Activated CD8-positive, alpha-beta T cell treated with anti-CD3 and anti-CD28 coated beads, Interleukin-2, amount 10 ng/mL, durations not matched to agents 7 days and 5 days (primary cell): ENCODE measurements at regions of chr11 and their contacts with region 1.

Region 1: DNA sequence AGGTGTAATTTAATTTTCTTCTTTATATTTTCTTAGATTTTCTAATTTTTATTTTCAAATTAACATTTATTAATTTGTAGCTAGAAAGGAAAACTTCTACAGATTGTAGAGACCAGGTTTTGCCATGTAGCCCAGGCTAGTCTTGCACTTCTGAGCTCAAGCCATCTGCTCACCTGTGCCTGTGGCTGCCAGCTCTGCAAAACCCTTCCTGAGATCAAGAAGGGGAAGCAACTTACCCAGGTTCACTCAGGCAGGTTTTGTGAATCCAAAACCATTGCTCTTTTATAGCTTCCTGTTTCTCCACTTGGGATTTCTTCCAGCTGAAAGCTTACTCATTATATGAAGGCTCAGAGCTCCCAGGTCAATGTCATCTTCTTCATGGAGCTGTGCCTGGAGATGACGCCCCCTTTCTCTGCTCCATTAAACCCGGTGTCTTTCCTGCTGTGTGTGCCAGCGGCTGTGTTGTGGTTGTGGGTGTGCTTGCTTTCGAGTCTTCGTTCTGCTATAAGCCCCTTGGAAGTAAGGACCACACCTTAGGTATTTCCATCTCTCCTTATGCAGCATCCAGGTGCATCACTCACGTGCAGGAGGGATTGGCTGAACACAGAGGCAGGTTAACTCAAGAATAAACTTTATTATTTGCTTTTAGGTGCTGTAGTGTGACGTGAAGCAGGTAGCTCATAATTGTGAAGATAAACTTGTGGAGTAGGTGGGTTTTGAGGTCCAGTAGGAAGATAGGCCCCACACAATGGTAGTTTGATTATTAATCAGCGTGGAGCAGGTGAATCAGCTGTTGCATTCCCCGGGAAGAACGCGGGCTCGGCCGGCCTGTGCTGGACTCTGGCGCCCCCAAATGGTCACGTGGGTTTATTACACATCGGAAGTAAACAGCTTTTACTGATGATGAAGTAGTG is 42.2 kb upstream of the INCENP start:
- DNase-seq: peak; percentile 82
- ATAC-seq: peak; percentile 67
- H3K4me3 Mint-ChIP-seq: peak overlapping the region; percentile 36
- H3K27ac Mint-ChIP-seq: no peak overlapping the region
- H3K4me1 Mint-ChIP-seq: peaks cover 8% of the 10 kb centered on the region
- H3K27me3 Mint-ChIP-seq: no peaks in the 10 kb centered on the region

Region 2: GRCh38 chr11:61881397-61881796 is 200.2 kb before region 1 on chr11:
- CTCF ChIA-PET with region 1: interaction called, 10 read pairs
- POLR2A ChIA-PET with region 1: no interaction called
- DNase-seq: no peak
- ATAC-seq: no peak
- H3K4me3 Mint-ChIP-seq: no peak overlapping the region
- H3K27ac Mint-ChIP-seq: no peak overlapping the region
- H3K4me1 Mint-ChIP-seq: no peaks in the 10 kb centered on the region
- H3K27me3 Mint-ChIP-seq: no peaks in the 10 kb centered on the region

Region 3: DNA sequence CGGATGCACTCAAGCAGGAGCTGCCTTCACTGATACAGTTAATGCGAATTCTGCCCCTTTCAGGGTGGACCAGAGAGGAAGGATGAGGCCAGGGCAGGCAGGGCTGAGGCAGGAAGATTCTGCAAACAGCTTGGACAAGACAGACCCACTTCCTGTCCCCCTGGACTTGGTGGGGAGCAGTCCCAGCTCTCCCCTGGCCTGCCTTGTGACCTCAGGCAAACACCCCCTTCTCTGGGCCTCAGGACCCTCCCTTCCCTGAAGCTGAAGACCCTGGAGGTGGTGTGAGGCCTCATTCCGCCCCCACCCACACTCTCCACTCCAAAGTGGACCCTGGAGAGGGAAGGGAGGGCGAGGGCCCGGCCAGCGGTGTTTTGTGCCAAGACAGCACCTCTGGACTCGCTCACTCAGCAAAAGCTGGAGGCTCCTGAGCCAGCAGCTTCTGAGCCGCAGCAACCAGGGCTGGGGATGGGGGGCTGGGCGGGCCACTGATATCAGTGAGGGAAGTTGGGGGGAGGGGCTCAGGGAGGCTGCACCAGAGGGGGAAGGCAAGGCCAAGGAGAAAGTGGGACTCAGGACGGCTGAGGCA is 172.8 kb before region 1 on chr11:
- CTCF ChIA-PET with region 1: interaction called, 337 read pairs
- POLR2A ChIA-PET with region 1: no interaction called
- DNase-seq: no peak
- ATAC-seq: no peak
- H3K4me3 Mint-ChIP-seq: no peak overlapping the region
- H3K27ac Mint-ChIP-seq: no peak overlapping the region
- H3K4me1 Mint-ChIP-seq: no peaks in the 10 kb centered on the region
- H3K27me3 Mint-ChIP-seq: peaks cover 3% of the 10 kb centered on the region

Region 4: DNA sequence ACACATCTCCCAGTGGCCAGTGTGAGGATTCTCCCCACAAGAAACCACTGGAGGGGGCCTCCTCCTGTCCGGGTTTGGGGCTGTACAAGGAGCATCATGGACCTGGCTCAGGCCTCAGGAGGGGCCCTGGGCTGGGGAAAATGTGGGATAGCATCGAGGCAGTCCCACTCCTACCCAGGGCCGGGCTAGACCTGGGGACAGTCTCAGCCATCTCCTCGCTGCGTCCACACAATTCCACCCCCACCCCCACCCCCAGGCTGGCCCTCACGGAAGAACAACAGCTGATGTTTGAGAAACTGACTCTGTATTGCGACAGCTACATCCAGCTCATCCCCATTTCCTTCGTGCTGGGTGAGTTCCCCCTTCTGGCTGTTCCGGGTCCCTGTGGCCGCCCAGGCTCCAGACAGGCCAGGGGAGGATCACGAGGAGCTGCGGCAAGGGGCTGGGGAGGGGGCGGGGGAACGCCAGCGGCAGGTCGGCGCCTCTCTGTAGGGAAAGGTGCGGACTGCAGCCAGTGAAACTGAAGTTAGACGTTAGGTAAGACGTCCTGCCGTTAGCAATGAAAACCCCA is 126.7 kb before region 1 on chr11:
- CTCF ChIA-PET with region 1: interaction called, 114 read pairs
- POLR2A ChIA-PET with region 1: no interaction called
- DNase-seq: peak; percentile 21
- ATAC-seq: no peak
- H3K4me3 Mint-ChIP-seq: no peak overlapping the region
- H3K27ac Mint-ChIP-seq: no peak overlapping the region
- H3K4me1 Mint-ChIP-seq: peaks cover 8% of the 10 kb centered on the region
- H3K27me3 Mint-ChIP-seq: peaks cover 22% of the 10 kb centered on the region

Region 5: GRCh38 chr11:61994981-61995380 is 86.7 kb before region 1 on chr11:
- CTCF ChIA-PET with region 1: interaction called, 13 read pairs
- POLR2A ChIA-PET with region 1: no interaction called
- DNase-seq: no peak
- ATAC-seq: no peak
- H3K4me3 Mint-ChIP-seq: no peak overlapping the region
- H3K27ac Mint-ChIP-seq: no peak overlapping the region
- H3K4me1 Mint-ChIP-seq: no peaks in the 10 kb centered on the region
- H3K27me3 Mint-ChIP-seq: peaks cover 6% of the 10 kb centered on the region

Region 6: GRCh38 chr11:62069986-62070919 is 11.4 kb before region 1 on chr11:
- CTCF ChIA-PET with region 1: interaction called, 32 read pairs
- POLR2A ChIA-PET with region 1: no interaction called
- DNase-seq: no peak
- ATAC-seq: no peak
- H3K4me3 Mint-ChIP-seq: no peak overlapping the region
- H3K27ac Mint-ChIP-seq: no peak overlapping the region
- H3K4me1 Mint-ChIP-seq: no peaks in the 10 kb centered on the region
- H3K27me3 Mint-ChIP-seq: no peaks in the 10 kb centered on the region